A673 (cell line): ENCODE measurements at regions of chr3 and their contacts with region 1.

Region 1: DNA sequence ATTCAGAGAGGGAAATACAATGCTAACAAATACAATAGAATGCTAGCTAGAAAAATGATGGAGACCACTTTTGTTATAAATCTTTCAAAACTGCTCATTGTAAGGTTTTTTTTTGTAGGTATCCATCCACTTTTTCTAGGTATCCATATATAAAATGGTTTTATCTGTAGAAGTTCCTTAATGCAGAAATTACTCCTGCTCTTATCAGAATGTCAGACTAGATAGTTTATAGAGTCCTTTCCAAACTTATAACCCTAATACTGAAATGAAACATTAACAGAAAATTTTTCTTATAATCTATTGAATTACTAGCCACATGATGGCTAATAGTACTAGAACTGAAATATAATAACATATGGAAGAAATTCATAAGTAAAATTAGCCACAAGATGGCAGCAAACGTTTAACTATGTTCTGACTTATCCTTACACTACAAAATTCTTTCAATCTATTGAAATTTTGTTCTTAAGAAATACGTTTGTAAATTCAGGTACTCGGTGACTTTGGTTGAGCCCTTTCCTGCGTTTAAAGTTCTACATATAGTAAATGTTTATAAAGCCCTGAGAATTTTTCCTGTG is 58.5 kb downstream of the ECT2 start:
- DNase-seq: peak; percentile 64
- H3K4me3 ChIP-seq: no peak overlapping the region
- H3K27ac ChIP-seq: no peak overlapping the region
- H3K4me1 ChIP-seq: peaks cover 15% of the 10 kb centered on the region
- H3K27me3 ChIP-seq: no peaks in the 10 kb centered on the region
- CTCF ChIP-seq: peak; percentile 60

Region 2: DNA sequence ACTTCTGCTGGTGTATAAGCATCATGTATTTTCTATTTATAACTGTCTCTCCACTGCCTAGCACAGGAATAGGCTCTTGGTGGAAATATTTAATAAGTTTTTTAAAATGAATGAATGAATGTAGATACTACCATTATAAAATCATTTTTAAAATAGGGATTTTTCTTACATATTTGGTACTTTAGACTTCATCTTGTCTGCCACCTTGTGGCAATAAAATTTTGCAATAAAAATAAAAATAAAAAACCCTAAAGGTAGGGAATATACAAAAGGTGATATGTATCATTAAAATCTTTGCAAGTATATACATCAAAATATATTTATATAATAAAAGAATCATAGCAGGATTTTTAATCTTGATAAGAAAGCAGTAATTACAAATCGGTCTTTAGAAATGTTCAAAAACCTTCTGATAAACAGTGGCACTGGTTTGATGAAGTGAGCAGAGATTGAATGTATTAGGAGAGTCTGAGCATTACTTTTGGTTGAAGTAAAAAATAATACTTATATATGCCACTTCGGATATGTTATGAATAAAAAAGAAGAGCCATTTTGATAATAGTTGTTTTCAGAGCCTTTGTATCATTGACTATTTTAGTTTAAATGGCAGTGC is 236.8 kb after region 1 on chr3:
- CTCF ChIA-PET with region 1: no interaction called
- POLR2A ChIA-PET with region 1: no interaction called
- intact Hi-C with region 1: loop called (anchors 5 kb)
- DNase-seq: no peak
- H3K4me3 ChIP-seq: no peak overlapping the region
- H3K27ac ChIP-seq: no peak overlapping the region
- H3K4me1 ChIP-seq: peaks cover 8% of the 10 kb centered on the region
- H3K27me3 ChIP-seq: no peaks in the 10 kb centered on the region
- CTCF ChIP-seq: no peak; the same call in none of the 2 replicates

Region 3: DNA sequence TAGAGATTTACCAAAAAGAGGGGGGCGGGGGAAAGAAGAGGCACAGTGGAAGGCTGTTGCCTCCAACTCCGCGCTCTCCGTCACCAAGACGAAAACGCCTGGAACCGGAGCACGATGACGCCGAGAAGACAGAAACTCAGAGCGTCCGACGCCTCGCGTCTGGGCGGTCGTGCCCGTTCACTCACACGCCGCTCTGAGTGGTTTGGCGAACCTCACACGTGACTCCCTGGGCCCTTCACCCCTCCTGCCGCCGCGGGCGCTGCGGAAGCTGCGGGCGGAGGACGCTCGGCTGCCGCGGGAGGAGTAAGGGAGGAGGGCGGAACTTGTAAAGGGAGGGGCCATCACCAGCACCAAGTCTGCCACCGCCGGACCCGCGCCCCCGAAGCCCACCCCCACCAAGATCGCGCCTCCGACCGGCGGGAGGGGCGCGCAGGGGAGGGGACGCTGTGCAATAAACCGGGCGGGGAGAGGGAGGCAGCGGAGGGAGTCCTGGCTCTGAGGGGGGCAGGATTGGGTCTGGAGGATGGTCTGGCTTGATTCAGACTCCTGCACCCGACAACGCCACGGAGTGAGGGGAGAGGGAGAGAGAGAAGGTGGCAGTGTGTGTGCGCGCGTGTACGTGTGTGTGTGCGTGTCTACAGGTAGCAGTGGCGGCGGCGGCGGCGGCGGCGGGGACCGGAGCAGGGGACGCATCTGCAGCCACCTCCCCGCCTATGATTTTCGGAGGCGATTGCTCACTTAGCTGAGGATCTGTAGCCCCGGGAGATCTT is 586.5 kb after region 1 on chr3:
- CTCF ChIA-PET with region 1: no interaction called
- POLR2A ChIA-PET with region 1: no interaction called
- intact Hi-C with region 1: loop called (anchors 10 kb)
- DNase-seq: peak; percentile 89
- H3K4me3 ChIP-seq: peak overlapping the region; percentile 65
- H3K27ac ChIP-seq: no peak overlapping the region
- H3K4me1 ChIP-seq: peaks cover 27% of the 10 kb centered on the region
- H3K27me3 ChIP-seq: peaks cover 42% of the 10 kb centered on the region
- CTCF ChIP-seq: no peak